ENCODE measurements at regions of chr20 and their contacts with region 1.

Region 1: DNA sequence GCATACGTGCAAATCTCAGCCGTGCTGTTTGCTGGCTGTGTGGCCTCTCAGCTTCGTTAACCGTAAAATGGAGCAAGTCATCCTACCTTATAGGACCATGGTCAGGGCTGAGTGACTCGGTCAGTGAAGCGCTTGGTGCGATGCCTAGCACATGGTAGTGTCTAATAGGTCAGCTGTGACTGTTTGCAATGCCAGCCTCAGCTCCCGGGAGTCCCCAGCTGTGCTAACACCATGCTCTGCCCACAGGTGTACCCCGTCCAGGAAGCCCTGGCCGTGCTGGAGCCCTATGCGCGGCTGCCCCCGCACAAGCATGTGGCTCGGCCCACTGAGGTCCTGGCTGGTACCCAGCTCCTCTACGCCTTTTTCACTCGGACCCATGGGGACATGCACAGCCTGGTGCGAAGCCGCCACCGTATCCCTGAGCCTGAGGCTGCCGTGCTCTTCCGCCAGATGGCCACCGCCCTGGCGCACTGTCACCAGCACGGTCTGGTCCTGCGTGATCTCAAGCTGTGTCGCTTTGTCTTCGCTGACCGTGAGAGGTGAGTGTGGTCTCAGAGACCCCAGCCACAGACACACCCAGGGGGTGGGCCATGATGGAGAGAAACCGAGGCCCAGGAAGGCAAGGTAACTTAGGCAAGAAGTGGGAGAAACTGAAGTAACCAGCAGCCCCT is 10.6 kb downstream of the TRIB3 start:
- DNase-seq: no peak
- H3K4me3 ChIP-seq: no peak overlapping the region
- H3K27ac ChIP-seq: no peak overlapping the region
- H3K4me1 ChIP-seq: no peaks in the 10 kb centered on the region
- H3K27me3 ChIP-seq: no peaks in the 10 kb centered on the region
- CTCF ChIP-seq: no peak
- POLR2A ChIP-seq: no peak

Region 2: GRCh38 chr20:401682-402495 is 10.7 kb after region 1 on chr20:
- CTCF ChIA-PET with region 1: no interaction called
- POLR2A ChIA-PET with region 1: interaction called, 11 read pairs
- dilution Hi-C with region 1: no loop called
- intact Hi-C with region 1: no loop called
- DNase-seq: no peak
- H3K4me3 ChIP-seq: no peak overlapping the region
- H3K27ac ChIP-seq: no peak overlapping the region
- H3K4me1 ChIP-seq: no peaks in the 10 kb centered on the region
- H3K27me3 ChIP-seq: no peaks in the 10 kb centered on the region
- CTCF ChIP-seq: no peak
- POLR2A ChIP-seq: no peak